Caco-2 (cell line): ENCODE measurements at regions of chr7 and their contacts with region 1.

Region 1: GRCh38 chr7:52146871-52147634 is 830.4 kb upstream of the COBL start:
- DNase-seq: peak; percentile 77 to 79
- H3K4me3 ChIP-seq: no peak overlapping the region
- H3K4me3 Mint-ChIP-seq: peak overlapping the region; percentile 46
- H3K27ac Mint-ChIP-seq: peak overlapping the region; percentile 88
- H3K4me1 ChIP-seq: peaks cover 61% of the 10 kb centered on the region
- H3K4me1 Mint-ChIP-seq: peaks cover 16% of the 10 kb centered on the region
- H3K27me3 ChIP-seq: no peaks in the 10 kb centered on the region
- H3K27me3 Mint-ChIP-seq: no peaks in the 10 kb centered on the region
- CTCF ChIP-seq: no peak

Region 2: DNA sequence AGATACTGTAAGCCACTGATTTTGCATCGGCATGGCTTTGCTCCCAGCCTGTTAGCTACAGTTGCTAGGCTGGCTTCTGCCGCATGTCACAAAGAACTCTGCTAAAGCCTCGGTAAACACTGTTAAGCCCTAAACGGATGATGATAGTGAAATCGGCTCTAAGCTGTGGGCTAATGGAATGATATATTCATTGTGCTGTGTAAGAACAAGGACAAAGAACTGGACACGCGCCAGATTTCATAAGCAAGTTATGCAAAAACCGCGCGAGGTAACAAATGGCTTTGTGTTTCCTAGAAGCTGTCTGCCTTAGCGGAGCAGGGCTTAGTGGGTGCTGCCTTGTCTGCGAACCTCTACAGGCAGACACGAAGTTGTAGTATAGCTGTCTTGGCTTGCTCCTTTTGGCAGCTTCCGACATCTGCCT is 499.1 kb before region 1 on chr7:
- CTCF ChIA-PET with region 1: no interaction called
- POLR2A ChIA-PET with region 1: no interaction called
- intact Hi-C with region 1: loop called (anchors 10 kb)
- DNase-seq: peak; percentile 82 to 83
- H3K4me3 ChIP-seq: peak overlapping the region; percentile 29
- H3K4me3 Mint-ChIP-seq: peak overlapping the region; percentile 56
- H3K27ac Mint-ChIP-seq: peak overlapping the region; percentile 64
- H3K4me1 ChIP-seq: peaks cover 15% of the 10 kb centered on the region
- H3K4me1 Mint-ChIP-seq: peaks cover 21% of the 10 kb centered on the region
- H3K27me3 ChIP-seq: no peaks in the 10 kb centered on the region
- H3K27me3 Mint-ChIP-seq: no peaks in the 10 kb centered on the region
- CTCF ChIP-seq: no peak

Region 3: GRCh38 chr7:51995596-51996179 is 151.4 kb before region 1 on chr7:
- CTCF ChIA-PET with region 1: no interaction called
- POLR2A ChIA-PET with region 1: no interaction called
- intact Hi-C with region 1: loop called (anchors 2 kb)
- DNase-seq: no peak
- H3K4me3 ChIP-seq: no peak overlapping the region
- H3K4me3 Mint-ChIP-seq: no peak overlapping the region
- H3K27ac Mint-ChIP-seq: peak overlapping the region; percentile 31
- H3K4me1 ChIP-seq: peaks cover 38% of the 10 kb centered on the region
- H3K4me1 Mint-ChIP-seq: peaks cover 25% of the 10 kb centered on the region
- H3K27me3 ChIP-seq: no peaks in the 10 kb centered on the region
- H3K27me3 Mint-ChIP-seq: no peaks in the 10 kb centered on the region
- CTCF ChIP-seq: no peak

Region 4: DNA sequence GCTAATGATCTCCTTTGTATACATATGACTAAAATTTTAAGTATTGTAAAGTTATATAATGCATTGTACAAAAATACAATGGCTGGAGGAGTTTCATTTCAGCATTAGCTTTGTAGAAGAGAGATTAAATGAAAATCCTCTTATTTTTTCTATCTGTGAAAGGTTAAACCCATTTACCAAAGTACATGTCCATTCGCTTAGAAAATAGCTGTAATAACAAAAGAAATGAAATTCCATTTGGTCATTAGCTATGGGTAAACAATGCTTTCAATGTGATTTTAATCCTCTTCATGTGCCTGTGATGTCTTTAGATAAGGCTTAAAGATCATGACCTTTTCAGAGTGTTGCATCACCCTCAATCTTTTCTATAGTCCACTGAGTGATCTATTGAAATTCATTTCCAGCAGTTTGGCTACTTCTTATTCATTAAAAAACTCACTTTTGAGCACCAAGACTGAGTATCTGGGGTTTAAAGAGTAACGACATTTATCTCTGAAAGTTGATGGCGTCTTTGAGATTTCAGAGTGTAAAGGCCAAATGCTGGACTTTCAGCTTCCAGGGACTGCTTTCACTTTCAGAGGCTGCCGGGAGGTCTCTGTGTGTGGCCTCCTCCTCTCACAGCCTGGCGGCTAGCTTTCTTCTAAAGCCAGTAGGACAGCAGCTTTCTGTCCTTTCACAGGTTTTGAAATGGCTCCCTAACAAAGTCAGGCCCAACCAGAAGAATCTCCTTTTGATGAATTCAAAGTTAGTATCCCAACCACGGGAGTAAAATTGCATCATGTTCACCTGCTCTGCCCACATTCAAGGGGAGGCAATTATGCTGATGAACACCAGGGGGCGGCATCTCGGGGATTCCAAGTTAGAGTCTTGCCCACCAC is 129.0 kb before region 1 on chr7:
- CTCF ChIA-PET with region 1: no interaction called
- POLR2A ChIA-PET with region 1: no interaction called
- intact Hi-C with region 1: loop called (anchors 1 kb)
- DNase-seq: peak; percentile 69 to 71
- H3K4me3 ChIP-seq: no peak overlapping the region
- H3K4me3 Mint-ChIP-seq: no peak overlapping the region
- H3K27ac Mint-ChIP-seq: peak overlapping the region; percentile 39
- H3K4me1 ChIP-seq: peaks cover 18% of the 10 kb centered on the region
- H3K4me1 Mint-ChIP-seq: peaks cover 7% of the 10 kb centered on the region
- H3K27me3 ChIP-seq: no peaks in the 10 kb centered on the region
- H3K27me3 Mint-ChIP-seq: no peaks in the 10 kb centered on the region
- CTCF ChIP-seq: peak; percentile 44 to 75

Region 5: GRCh38 chr7:52473756-52474155 is 326.7 kb after region 1 on chr7:
- CTCF ChIA-PET with region 1: no interaction called
- POLR2A ChIA-PET with region 1: no interaction called
- intact Hi-C with region 1: no loop called
- DNase-seq: no peak
- H3K4me3 ChIP-seq: no peak overlapping the region
- H3K4me3 Mint-ChIP-seq: no peak overlapping the region
- H3K27ac Mint-ChIP-seq: no peak overlapping the region
- H3K4me1 ChIP-seq: no peaks in the 10 kb centered on the region
- H3K4me1 Mint-ChIP-seq: no peaks in the 10 kb centered on the region
- H3K27me3 ChIP-seq: no peaks in the 10 kb centered on the region
- H3K27me3 Mint-ChIP-seq: peaks cover 7% of the 10 kb centered on the region
- CTCF ChIP-seq: no peak

Region 6: DNA sequence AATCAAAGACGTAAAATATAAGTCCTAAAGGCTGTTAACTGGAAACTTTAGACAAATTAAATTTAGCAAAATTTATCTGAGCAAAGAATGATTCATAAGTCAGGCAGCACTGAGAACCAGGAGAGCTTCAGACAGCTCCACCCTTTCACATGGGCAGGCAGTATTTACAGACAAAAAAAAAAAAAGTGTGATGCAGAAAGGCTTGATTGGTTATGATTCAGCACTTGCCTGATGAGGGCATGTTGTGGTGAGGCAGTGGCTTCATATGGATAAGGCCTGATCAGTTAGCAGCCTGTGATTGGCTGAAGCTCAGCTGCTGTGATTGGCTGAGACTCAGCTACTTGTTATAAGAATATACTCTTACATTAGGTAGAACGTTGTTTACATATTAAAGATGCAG is 393.0 kb after region 1 on chr7:
- CTCF ChIA-PET with region 1: no interaction called
- POLR2A ChIA-PET with region 1: no interaction called
- intact Hi-C with region 1: loop called (anchors 1 kb)
- DNase-seq: no peak
- H3K4me3 ChIP-seq: no peak overlapping the region
- H3K4me3 Mint-ChIP-seq: no peak overlapping the region
- H3K27ac Mint-ChIP-seq: no peak overlapping the region
- H3K4me1 ChIP-seq: peaks cover 34% of the 10 kb centered on the region
- H3K4me1 Mint-ChIP-seq: peaks cover 13% of the 10 kb centered on the region
- H3K27me3 ChIP-seq: no peaks in the 10 kb centered on the region
- H3K27me3 Mint-ChIP-seq: no peaks in the 10 kb centered on the region
- CTCF ChIP-seq: no peak